Activated CD8-positive, alpha-beta T cell treated with anti-CD3 and anti-CD28 coated beads for 36 hours (primary cell): ENCODE measurements at regions of chrX and their contacts with region 1.

Region 1: GRCh38 chrX:100994352-100995281 is 25.1 kb downstream of the ARL13A start:
- DNase-seq: peak; percentile 6
- ATAC-seq: peak; percentile 93
- H3K4me3 Mint-ChIP-seq: no peak overlapping the region
- H3K27ac Mint-ChIP-seq: peak overlapping the region; percentile 72
- H3K4me1 Mint-ChIP-seq: peaks cover 17% of the 10 kb centered on the region
- H3K27me3 Mint-ChIP-seq: no peaks in the 10 kb centered on the region
- CTCF ChIP-seq: no peak

Region 2: GRCh38 chrX:100852810-100853209 is 141.8 kb before region 1 on chrX:
- CTCF ChIA-PET with region 1: no interaction called
- POLR2A ChIA-PET with region 1: no interaction called
- intact Hi-C with region 1: no loop called
- DNase-seq: no peak
- ATAC-seq: no peak
- H3K4me3 Mint-ChIP-seq: no peak overlapping the region
- H3K27ac Mint-ChIP-seq: no peak overlapping the region
- H3K4me1 Mint-ChIP-seq: no peaks in the 10 kb centered on the region
- H3K27me3 Mint-ChIP-seq: no peaks in the 10 kb centered on the region
- CTCF ChIP-seq: no peak

Region 3: GRCh38 chrX:100928660-100929613 is 65.7 kb before region 1 on chrX and contains the start of gene XKRX:
- CTCF ChIA-PET with region 1: no interaction called
- POLR2A ChIA-PET with region 1: no interaction called
- intact Hi-C with region 1: loop called (anchors 2 kb)
- DNase-seq: peak; percentile 73
- ATAC-seq: peak; percentile 82
- H3K4me3 Mint-ChIP-seq: peak within 1 kb of the TSS; percentile 82
- H3K27ac Mint-ChIP-seq: peak within 1 kb of the TSS; percentile 66
- H3K4me1 Mint-ChIP-seq: peaks cover 47% of the 10 kb centered on the region
- H3K27me3 Mint-ChIP-seq: no peaks in the 10 kb centered on the region
- CTCF ChIP-seq: no peak
- total RNA-seq, gene XKRX: 0.43 to 0.49 TPM

Region 4: GRCh38 chrX:101025126-101025525 is 30.5 kb after region 1 on chrX:
- CTCF ChIA-PET with region 1: no interaction called
- POLR2A ChIA-PET with region 1: no interaction called
- intact Hi-C with region 1: no loop called
- DNase-seq: no peak
- ATAC-seq: no peak
- H3K4me3 Mint-ChIP-seq: no peak overlapping the region
- H3K27ac Mint-ChIP-seq: no peak overlapping the region
- H3K4me1 Mint-ChIP-seq: peaks cover 3% of the 10 kb centered on the region
- H3K27me3 Mint-ChIP-seq: no peaks in the 10 kb centered on the region
- CTCF ChIP-seq: no peak